ENCODE measurements at regions of chr14 and their contacts with region 1.

Region 1: DNA sequence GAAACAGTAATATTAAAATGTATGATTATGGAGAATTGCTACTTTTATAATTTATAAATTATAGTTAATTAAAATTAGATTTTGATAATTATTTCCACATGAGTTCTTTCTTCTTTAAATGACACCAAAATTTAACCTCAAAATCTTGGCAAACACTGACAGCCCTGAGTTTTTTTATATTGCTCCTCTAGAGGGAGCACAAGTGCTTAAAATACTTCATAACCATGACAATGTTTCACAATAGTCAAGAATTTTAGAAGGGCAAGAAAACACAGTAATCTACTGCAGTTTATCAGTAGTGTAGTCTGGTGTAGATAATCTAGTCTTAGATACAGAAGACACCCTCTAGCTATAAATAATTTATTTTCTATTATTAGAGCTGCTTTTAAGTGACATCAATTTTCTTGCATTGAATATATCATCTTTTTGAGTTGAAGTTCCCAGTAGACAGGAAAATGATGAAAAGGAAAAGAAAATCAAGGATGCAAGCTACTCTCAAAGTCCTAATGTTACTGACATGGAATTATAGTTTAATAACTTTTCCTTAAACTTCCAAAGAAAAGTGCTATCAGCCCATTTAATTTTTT is 14.3 kb upstream of the PTGER2 start:
- DNase-seq: no peak
- ATAC-seq: peak; percentile 77 to 89 (median 86)
- H3K4me3 ChIP-seq: no peak overlapping the region
- H3K27ac ChIP-seq: no peak overlapping the region
- H3K4me1 ChIP-seq: no peaks in the 10 kb centered on the region
- H3K27me3 ChIP-seq: no peaks in the 10 kb centered on the region
- CTCF ChIP-seq: peak; percentile 70 to 80 (median 75)
- POLR2A ChIP-seq: no peak

Region 2: GRCh38 chr14:52220924-52221811 is 78.6 kb before region 1 on chr14:
- intact Hi-C with region 1: no loop called
- DNase-seq: no peak
- ATAC-seq: peak in 1 of 4 donors; percentile 31
- H3K4me3 ChIP-seq: peak overlapping the region in 1 of 3 donors; percentile 9
- H3K27ac ChIP-seq: no peak overlapping the region
- H3K4me1 ChIP-seq: no peaks in the 10 kb centered on the region
- H3K27me3 ChIP-seq: no peaks in the 10 kb centered on the region
- CTCF ChIP-seq: no peak
- POLR2A ChIP-seq: no peak

Region 3: DNA sequence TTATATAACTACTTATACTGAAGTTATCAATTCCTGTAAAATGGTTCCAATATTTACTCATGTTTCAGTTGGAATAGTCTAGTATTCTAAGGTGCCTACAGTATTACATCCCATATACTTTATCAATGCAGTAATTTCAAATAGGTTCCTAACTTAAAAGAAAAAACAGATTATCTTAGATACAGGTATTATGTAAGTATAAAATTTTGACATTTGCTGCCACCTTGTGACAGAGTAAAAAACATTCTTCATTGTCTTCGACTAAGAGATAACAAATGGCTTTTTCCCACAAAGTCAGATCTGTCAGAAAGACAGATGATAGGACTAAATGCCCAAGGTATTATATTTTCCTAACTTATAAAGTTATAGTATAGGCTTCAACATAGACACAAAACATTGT is 173.8 kb after region 1 on chr14:
- intact Hi-C with region 1: loop called (anchors 5 kb)
- DNase-seq: no peak
- ATAC-seq: peak; percentile 43 to 71 (median 60)
- H3K4me3 ChIP-seq: no peak overlapping the region
- H3K27ac ChIP-seq: no peak overlapping the region
- H3K4me1 ChIP-seq: no peaks in the 10 kb centered on the region
- H3K27me3 ChIP-seq: no peaks in the 10 kb centered on the region
- CTCF ChIP-seq: peak; percentile 45 to 55 (median 50)
- POLR2A ChIP-seq: no peak